ENCODE measurements at regions of chr7 and their contacts with region 1.

Region 1: GRCh38 chr7:108569381-108570145 is at the starts of genes DNAJB9 and THAP5:
- DNase-seq: peak; percentile 97 to 100 (median 98)
- ATAC-seq: peak; percentile 92
- H3K4me3 ChIP-seq: peak within 1 kb of the TSS; percentile 72
- H3K27ac ChIP-seq: peak within 1 kb of the TSS; percentile 93
- H3K4me1 ChIP-seq: peaks cover 11 to 13% of the 10 kb centered on the region in 2 experiments; a peak in 4 of 5 replicates
- H3K27me3 ChIP-seq: no peaks in the 10 kb centered on the region
- CTCF ChIP-seq: peak in 1 of 3 experiments; percentile 26; a peak in 3 of 6 replicates
- EP300 ChIP-seq: peak; percentile 66
- POLR2A ChIP-seq: peak; percentile 98
- RAD21 ChIP-seq: no peak
- polyA plus RNA-seq, gene DNAJB9: 4.3 to 5.3 TPM
- polyA plus RNA-seq, gene THAP5: 26.3 to 27.8 TPM

Region 2: GRCh38 chr7:108189733-108190388 is 379.7 kb before region 1 on chr7:
- CTCF ChIA-PET with region 1: no interaction called
- POLR2A ChIA-PET with region 1: no interaction called
- in situ Hi-C with region 1: no loop called
- intact Hi-C with region 1: no loop called
- DNase-seq: no peak
- ATAC-seq: no peak
- H3K4me3 ChIP-seq: no peak overlapping the region
- H3K27ac ChIP-seq: no peak overlapping the region
- H3K4me1 ChIP-seq: peaks cover 0 to 8% of the 10 kb centered on the region in 2 experiments; a peak in 3 of 5 replicates
- H3K27me3 ChIP-seq: no peaks in the 10 kb centered on the region
- CTCF ChIP-seq: no peak
- EP300 ChIP-seq: no peak
- POLR2A ChIP-seq: no peak
- RAD21 ChIP-seq: no peak

Region 3: DNA sequence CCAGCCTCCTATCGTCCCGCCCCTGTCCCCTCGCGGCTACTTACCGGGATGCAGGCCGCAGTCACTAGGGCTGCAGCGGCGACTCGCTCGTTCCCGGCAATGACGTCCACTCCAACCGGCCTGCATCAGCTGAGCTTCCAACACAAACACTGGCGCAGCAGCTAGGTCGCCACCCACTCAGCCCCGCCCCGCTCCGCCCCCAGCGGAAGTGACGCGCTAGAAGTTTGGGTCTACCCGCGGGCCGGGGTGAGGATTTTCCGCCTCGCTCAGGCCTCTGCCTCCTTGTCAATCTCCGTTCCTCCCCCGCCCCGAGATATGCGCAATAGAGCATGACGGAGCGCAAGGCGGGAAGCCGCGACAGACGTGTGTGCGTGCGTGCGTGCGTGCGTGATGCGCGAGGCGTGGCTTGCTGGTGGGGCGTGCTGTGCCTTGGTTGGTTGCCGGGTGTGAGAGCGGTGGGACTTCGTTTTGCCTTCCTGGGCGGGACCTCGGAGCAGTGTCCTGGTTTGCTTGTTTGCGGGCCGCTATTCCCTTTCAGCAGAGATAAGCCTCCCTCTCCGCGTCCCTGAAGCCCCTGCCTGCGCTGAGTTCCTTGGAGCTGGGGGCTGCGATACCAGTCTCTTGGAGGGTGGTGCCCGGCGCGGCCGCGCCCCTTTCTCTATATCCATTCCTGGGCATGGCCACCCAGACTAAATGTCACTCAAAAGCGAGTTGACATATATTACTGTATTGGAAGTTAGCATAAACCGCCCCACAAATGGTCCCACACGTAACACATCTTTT is 43.4 kb before region 1 on chr7 and contains the start of gene PNPLA8:
- CTCF ChIA-PET with region 1: no interaction called
- POLR2A ChIA-PET with region 1: interaction called, 19 read pairs
- in situ Hi-C with region 1: no loop called
- intact Hi-C with region 1: loop called (anchors 1 kb)
- DNase-seq: peak; percentile 96 to 100 (median 98)
- ATAC-seq: peak; percentile 95
- H3K4me3 ChIP-seq: peak within 1 kb of the TSS; percentile 67
- H3K27ac ChIP-seq: peak within 1 kb of the TSS; percentile 84
- H3K4me1 ChIP-seq: peaks cover 11 to 24% of the 10 kb centered on the region in 2 experiments; a peak in 4 of 5 replicates
- H3K27me3 ChIP-seq: no peaks in the 10 kb centered on the region
- CTCF ChIP-seq: peak in 2 of 3 experiments; percentile 10 to 20; a peak in 1 of 6 replicates
- EP300 ChIP-seq: no peak; the same call in 1 of the 2 replicates
- POLR2A ChIP-seq: peak; percentile 96
- RAD21 ChIP-seq: peak in 1 of 2 experiments; percentile 5; a peak in 1 of 4 replicates
- polyA plus RNA-seq, gene PNPLA8: 15.9 to 17.4 TPM

Region 4: DNA sequence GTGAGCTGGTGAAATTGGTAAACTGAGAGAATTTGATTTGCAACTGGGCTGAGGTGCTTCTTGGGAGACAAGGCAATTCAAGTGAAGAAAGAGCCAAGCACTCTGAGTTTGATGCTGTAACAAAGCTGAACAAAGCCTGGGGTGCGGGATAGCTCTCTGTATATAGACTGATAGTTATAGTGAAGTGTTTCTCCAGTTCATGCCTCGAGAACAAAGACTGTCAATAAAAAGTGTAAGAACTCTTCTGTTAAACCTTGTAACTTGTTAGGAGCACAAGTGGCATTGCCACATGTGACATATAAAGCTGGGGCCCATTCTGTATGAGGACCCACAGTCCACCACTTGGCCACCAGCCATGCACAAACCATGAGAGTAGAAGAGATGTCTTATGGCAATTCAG is 32.3 kb before region 1 on chr7:
- CTCF ChIA-PET with region 1: no interaction called
- POLR2A ChIA-PET with region 1: interaction called, 3 read pairs
- in situ Hi-C with region 1: no loop called
- intact Hi-C with region 1: loop called (anchors 1 kb)
- DNase-seq: peak in 1 of 4 experiments; percentile 53
- ATAC-seq: peak; percentile 80
- H3K4me3 ChIP-seq: no peak overlapping the region
- H3K27ac ChIP-seq: peak overlapping the region; percentile 1; the same call in 2 of the 3 replicates
- H3K4me1 ChIP-seq: peaks cover 9 to 36% of the 10 kb centered on the region in 2 experiments
- H3K27me3 ChIP-seq: no peaks in the 10 kb centered on the region
- CTCF ChIP-seq: no peak
- EP300 ChIP-seq: no peak
- POLR2A ChIP-seq: no peak
- RAD21 ChIP-seq: no peak

Region 5: GRCh38 chr7:108581639-108582491 is 12.3 kb after region 1 on chr7:
- CTCF ChIA-PET with region 1: no interaction called
- POLR2A ChIA-PET with region 1: interaction called, 16 read pairs
- in situ Hi-C with region 1: no loop called
- intact Hi-C with region 1: no loop called
- DNase-seq: no peak
- ATAC-seq: no peak
- H3K4me3 ChIP-seq: no peak overlapping the region
- H3K27ac ChIP-seq: no peak overlapping the region
- H3K4me1 ChIP-seq: peaks cover 5 to 14% of the 10 kb centered on the region in 2 experiments
- H3K27me3 ChIP-seq: no peaks in the 10 kb centered on the region
- CTCF ChIP-seq: no peak
- EP300 ChIP-seq: no peak
- POLR2A ChIP-seq: no peak
- RAD21 ChIP-seq: no peak

Region 6: DNA sequence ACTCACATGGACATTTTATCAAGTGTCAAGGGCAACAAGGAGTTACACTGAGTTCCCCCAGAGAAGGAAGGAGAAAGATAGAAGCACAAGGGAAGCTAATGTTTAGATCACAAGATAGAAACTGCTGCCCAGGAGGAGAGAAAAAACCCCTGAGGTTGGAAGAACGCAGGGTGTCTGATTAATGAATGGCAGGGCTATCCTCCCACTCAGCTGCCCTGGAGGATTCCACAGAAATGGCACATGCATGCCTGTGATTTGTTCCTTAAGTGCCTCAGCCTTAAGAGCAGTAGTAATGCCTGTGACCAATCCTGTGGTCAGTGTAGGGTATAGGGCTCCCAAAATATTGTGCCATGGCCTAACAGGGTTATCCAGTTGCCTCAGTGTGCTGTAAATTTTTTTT is 20.3 kb after region 1 on chr7:
- CTCF ChIA-PET with region 1: no interaction called
- POLR2A ChIA-PET with region 1: interaction called, 16 read pairs
- in situ Hi-C with region 1: no loop called
- intact Hi-C with region 1: loop called (anchors 2 kb)
- DNase-seq: no peak
- ATAC-seq: peak; percentile 30; the same call in 2 of the 3 replicates
- H3K4me3 ChIP-seq: no peak overlapping the region
- H3K27ac ChIP-seq: no peak overlapping the region
- H3K4me1 ChIP-seq: peaks cover 5 to 16% of the 10 kb centered on the region in 2 experiments
- H3K27me3 ChIP-seq: peaks cover 11 to 16% of the 10 kb centered on the region in 2 experiments; a peak in 3 of 5 replicates
- CTCF ChIP-seq: no peak
- EP300 ChIP-seq: no peak
- POLR2A ChIP-seq: no peak
- RAD21 ChIP-seq: no peak

Measured in K562 (cell line).